GM23248 (cell line): ENCODE measurements at regions of chr2 and their contacts with region 1.

Region 1: GRCh38 chr2:65545837-65546805 is 113.7 kb upstream of the SPRED2 start:
- DNase-seq: peak; percentile 69
- H3K4me3 ChIP-seq: 0 out of 2 replicates have a peak overlapping the region, but pooled peaks have one; percentile 10
- H3K27ac ChIP-seq: peak overlapping the region; percentile 40
- H3K4me1 ChIP-seq: peaks cover 33% of the 10 kb centered on the region
- H3K27me3 ChIP-seq: no peaks in the 10 kb centered on the region

Region 2: GRCh38 chr2:65264821-65265670 is 281.1 kb before region 1 on chr2:
- in situ Hi-C with region 1: loop called (anchors 5 kb)
- DNase-seq: peak; percentile 82
- H3K4me3 ChIP-seq: no peak overlapping the region
- H3K27ac ChIP-seq: peak overlapping the region; percentile 13; the same call in 1 of the 2 replicates
- H3K4me1 ChIP-seq: peaks cover 23% of the 10 kb centered on the region
- H3K27me3 ChIP-seq: no peaks in the 10 kb centered on the region